CD8-positive, alpha-beta T cell (primary cell): ENCODE measurements at regions of chr5 and their contacts with region 1.

Region 1: GRCh38 chr5:73233347-73234200 is 60.6 kb downstream of the TMEM174 start:
- DNase-seq: peak in 1 of 9 experiments; percentile 17
- ATAC-seq: peak; percentile 31
- H3K4me3 ChIP-seq: peak overlapping the region in 1 of 2 experiments; percentile 36
- H3K4me3 Mint-ChIP-seq: peak overlapping the region; percentile 67
- H3K27ac ChIP-seq: no peak overlapping the region
- H3K27ac Mint-ChIP-seq: no peak overlapping the region
- H3K4me1 ChIP-seq: peaks cover 32% of the 10 kb centered on the region
- H3K4me1 Mint-ChIP-seq: peaks cover 28% of the 10 kb centered on the region
- H3K27me3 ChIP-seq: peaks cover 35 to 37% of the 10 kb centered on the region in 2 experiments
- H3K27me3 Mint-ChIP-seq: peaks cover 69% of the 10 kb centered on the region
- CTCF ChIP-seq: no peak

Region 2: GRCh38 chr5:73215891-73216610 is 17.5 kb before region 1 on chr5:
- CTCF ChIA-PET with region 1: interaction called, 11 read pairs
- POLR2A ChIA-PET with region 1: no interaction called
- intact Hi-C with region 1: no loop called
- DNase-seq: peak; percentile 36 to 77 (median 56)
- ATAC-seq: peak; percentile 95
- H3K4me3 ChIP-seq: peak overlapping the region; percentile 13 to 39
- H3K4me3 Mint-ChIP-seq: peak overlapping the region; percentile 69
- H3K27ac ChIP-seq: no peak overlapping the region
- H3K27ac Mint-ChIP-seq: no peak overlapping the region
- H3K4me1 ChIP-seq: peaks cover 9% of the 10 kb centered on the region
- H3K4me1 Mint-ChIP-seq: peaks cover 11% of the 10 kb centered on the region
- H3K27me3 ChIP-seq: peaks cover 15 to 27% of the 10 kb centered on the region in 2 experiments
- H3K27me3 Mint-ChIP-seq: peaks cover 76% of the 10 kb centered on the region
- CTCF ChIP-seq: peak; percentile 65

Region 3: GRCh38 chr5:73298772-73299630 is 65.4 kb after region 1 on chr5:
- CTCF ChIA-PET with region 1: no interaction called
- POLR2A ChIA-PET with region 1: no interaction called
- intact Hi-C with region 1: loop called in 1 of 2 experiments (anchors 2 kb)
- DNase-seq: peak in 2 of 9 experiments; percentile 25 to 28
- ATAC-seq: peak; percentile 40
- H3K4me3 ChIP-seq: no peak overlapping the region
- H3K4me3 Mint-ChIP-seq: no peak overlapping the region
- H3K27ac ChIP-seq: no peak overlapping the region
- H3K27ac Mint-ChIP-seq: no peak overlapping the region
- H3K4me1 ChIP-seq: no peaks in the 10 kb centered on the region
- H3K4me1 Mint-ChIP-seq: peaks cover 23% of the 10 kb centered on the region
- H3K27me3 ChIP-seq: peaks cover 16 to 45% of the 10 kb centered on the region in 2 experiments
- H3K27me3 Mint-ChIP-seq: peaks cover 82% of the 10 kb centered on the region
- CTCF ChIP-seq: no peak